HEK293 (cell line): ENCODE measurements at regions of chr4 and their contacts with region 1.

Region 1: DNA sequence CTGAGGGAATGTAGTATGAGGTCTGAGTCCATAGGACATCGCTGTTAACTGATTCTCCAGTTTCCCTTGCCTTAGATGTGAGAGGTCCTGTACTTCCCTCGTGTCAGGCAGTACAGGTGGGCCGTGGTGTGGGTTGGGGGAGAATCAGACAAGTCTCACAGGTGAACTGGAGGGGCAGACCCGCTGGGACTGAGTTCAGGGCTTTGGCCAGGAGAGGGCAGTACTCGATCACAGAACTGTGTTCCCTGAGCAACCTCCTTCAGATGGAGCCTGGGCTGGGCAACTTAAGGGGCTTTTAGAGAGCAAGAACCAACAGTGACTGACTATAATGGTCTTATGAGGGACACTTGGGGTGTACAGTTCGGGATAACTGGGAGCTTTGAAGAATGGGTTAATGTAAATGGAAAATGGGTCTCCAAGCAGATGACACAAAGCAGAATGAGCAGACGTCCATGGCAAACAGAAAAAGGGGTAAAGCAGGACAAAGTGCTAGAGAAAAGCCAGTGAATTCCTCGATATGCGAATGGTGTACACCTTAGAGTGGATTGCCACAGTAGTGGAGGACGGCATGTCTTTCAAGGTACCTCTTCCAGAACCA is 83.6 kb downstream of the CCNG2 start:
- H3K4me3 ChIP-seq: no peak overlapping the region
- H3K27ac ChIP-seq: no peak overlapping the region
- H3K4me1 ChIP-seq: no peaks in the 10 kb centered on the region
- CTCF ChIP-seq: peak; percentile 58; the same call in 1 of the 2 replicates

Region 2: DNA sequence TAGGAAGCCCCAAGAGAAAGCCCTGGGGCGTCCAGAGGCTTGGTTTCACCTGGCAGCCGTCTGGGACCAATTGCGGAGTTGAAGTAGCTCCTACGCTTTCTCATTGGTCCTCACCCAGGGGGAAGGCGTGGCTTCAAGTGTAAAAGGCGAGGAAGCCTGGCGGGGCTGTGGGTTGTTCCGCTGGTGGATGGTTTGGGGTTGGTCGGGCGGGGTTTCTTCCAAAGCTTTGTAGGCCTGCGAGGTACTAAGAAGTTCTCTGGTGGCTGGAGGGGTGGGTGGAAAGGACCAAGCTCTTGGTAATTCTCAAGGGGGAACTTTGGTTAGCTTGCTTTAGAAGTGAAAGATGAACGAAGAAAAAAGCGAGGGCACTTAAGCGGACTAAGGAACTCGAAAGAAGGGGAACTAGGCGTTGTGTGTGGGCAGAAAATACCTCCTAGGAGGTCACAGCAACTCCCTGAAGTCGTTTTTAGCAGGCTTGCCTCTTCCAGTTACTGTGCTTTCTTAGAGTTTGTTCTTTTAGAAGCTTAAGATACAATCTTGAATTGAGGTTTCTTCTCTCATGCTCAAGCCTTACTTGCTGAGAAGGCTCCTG is 47.0 kb before region 1 on chr4:
- CTCF ChIA-PET with region 1: no interaction called
- POLR2A ChIA-PET with region 1: no interaction called
- H3K4me3 ChIP-seq: no peak overlapping the region
- H3K27ac ChIP-seq: no peak overlapping the region
- H3K4me1 ChIP-seq: no peaks in the 10 kb centered on the region
- CTCF ChIP-seq: no peak

Region 3: GRCh38 chr4:77220828-77221613 is 19.5 kb before region 1 on chr4:
- CTCF ChIA-PET with region 1: interaction called, 11 read pairs
- POLR2A ChIA-PET with region 1: no interaction called
- H3K4me3 ChIP-seq: no peak overlapping the region
- H3K27ac ChIP-seq: no peak overlapping the region
- H3K4me1 ChIP-seq: no peaks in the 10 kb centered on the region
- CTCF ChIP-seq: no peak

Region 4: GRCh38 chr4:77308843-77309242 is 68.3 kb after region 1 on chr4:
- CTCF ChIA-PET with region 1: interaction called, 36 read pairs
- POLR2A ChIA-PET with region 1: no interaction called
- H3K4me3 ChIP-seq: no peak overlapping the region
- H3K27ac ChIP-seq: no peak overlapping the region
- H3K4me1 ChIP-seq: no peaks in the 10 kb centered on the region
- CTCF ChIP-seq: peak; percentile 25; the same call in 1 of the 2 replicates

Region 5: GRCh38 chr4:77347341-77347966 is 106.9 kb after region 1 on chr4:
- CTCF ChIA-PET with region 1: interaction called, 15 read pairs
- POLR2A ChIA-PET with region 1: no interaction called
- H3K4me3 ChIP-seq: no peak overlapping the region
- H3K27ac ChIP-seq: no peak overlapping the region
- H3K4me1 ChIP-seq: no peaks in the 10 kb centered on the region
- CTCF ChIP-seq: no peak

Region 6: DNA sequence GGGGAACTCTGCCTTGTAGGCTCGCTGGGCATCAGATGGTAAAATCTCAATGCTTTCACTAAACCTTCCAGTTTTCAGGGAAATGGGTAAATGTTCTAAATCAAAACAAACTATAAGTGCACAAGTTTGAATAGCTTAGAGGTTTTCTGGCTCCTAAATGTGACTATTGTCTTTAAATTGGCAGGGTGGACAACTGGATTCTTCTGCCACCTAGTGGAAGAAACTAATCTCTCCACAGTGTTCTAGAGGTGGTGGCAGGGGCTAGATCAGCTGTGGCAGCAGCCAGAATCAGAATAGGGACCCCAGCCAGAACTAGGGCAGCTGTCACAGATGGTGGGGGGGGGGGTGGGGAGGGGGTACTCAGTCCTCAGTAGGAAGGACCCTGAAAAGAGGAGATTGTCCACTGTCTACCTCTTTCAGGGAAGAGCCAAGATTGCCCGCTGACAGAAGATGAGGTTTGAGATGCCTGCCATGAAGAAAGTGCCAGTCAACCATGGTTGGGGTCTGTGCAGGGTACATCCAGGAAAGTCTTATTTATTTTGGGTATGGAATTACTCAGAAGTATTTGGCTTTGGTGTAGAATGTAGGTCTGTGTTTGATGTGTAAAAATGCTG is 117.9 kb after region 1 on chr4:
- CTCF ChIA-PET with region 1: interaction called, 37 read pairs
- POLR2A ChIA-PET with region 1: no interaction called
- H3K4me3 ChIP-seq: no peak overlapping the region
- H3K27ac ChIP-seq: no peak overlapping the region
- H3K4me1 ChIP-seq: no peaks in the 10 kb centered on the region
- CTCF ChIP-seq: no peak